H1 (cell line): ENCODE measurements at regions of chr3 and their contacts with region 1.

Region 1: DNA sequence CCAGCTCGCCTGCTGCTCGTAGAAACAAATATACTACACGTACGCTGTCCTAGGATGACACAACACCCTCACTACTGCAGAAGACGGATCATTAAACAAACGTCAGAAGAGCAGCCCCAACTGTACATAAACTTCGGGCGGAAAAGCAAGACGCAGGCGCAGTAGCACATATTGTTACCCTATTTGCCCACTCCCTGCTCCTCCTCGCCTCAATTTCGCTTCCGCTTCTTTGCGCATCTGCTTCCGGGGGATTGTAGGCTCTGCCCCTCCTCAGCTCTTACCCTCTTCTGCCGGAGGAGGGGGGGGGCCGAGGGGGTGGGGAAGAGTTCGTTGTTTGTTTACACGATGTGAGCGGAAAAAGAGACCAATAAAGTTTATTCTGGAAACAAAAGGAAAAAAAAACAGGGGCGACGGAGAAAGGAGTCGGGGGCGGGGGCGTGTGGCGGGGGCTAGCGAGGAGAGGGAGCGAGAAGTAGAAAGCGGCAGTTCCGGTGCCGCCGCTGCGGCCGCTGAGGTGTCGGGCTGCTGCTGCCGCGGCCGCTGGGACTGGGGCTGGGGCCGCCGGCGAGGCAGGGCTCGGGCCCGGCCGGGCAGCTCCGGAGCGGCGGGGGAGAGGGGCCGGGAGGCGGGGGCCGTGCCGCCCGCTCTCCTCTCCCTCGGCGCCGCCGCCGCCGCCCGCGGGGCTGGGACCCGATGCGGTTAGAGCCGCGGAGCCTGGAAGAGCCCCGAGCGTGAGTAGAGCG is at the start of gene PIK3CA:
- DNase-seq: peak; percentile 78 to 87
- H3K4me3 ChIP-seq: peak within 1 kb of the TSS; percentile 89 to 94 (median 92)
- H3K27ac ChIP-seq: peak within 1 kb of the TSS; percentile 74; the same call in 1 of the 2 replicates
- H3K4me1 ChIP-seq: no peaks in the 10 kb centered on the region
- H3K27me3 ChIP-seq: no peaks in the 10 kb centered on the region
- CTCF ChIP-seq: no peak
- EP300 ChIP-seq: no peak
- POLR2A ChIP-seq: peak in 1 of 2 experiments; percentile 64; a peak in 2 of 3 replicates
- RAD21 ChIP-seq: no peak
- total RNA-seq, gene PIK3CA: 11.3 and 14.1 TPM in 2 replicates

Region 2: GRCh38 chr3:179136195-179136594 is 11.8 kb before region 1 on chr3:
- CTCF ChIA-PET with region 1: interaction called, 11 read pairs
- POLR2A ChIA-PET with region 1: no interaction called
- DNase-seq: no peak
- H3K4me3 ChIP-seq: no peak overlapping the region
- H3K27ac ChIP-seq: no peak overlapping the region
- H3K4me1 ChIP-seq: no peaks in the 10 kb centered on the region
- H3K27me3 ChIP-seq: no peaks in the 10 kb centered on the region
- CTCF ChIP-seq: no peak
- EP300 ChIP-seq: no peak
- POLR2A ChIP-seq: no peak
- RAD21 ChIP-seq: no peak